Right lobe of liver (tissue), 6 donors: ENCODE measurements at regions of chr19 and their contacts with region 1.

Region 1: GRCh38 chr19:46495787-46496101 is at the start of gene PNMA8B:
- DNase-seq: peak in 2 of 3 donors; percentile 30 to 47
- ATAC-seq: peak in 1 of 4 donors; percentile 12
- H3K4me3 ChIP-seq: peak within 1 kb of the TSS in 1 of 3 donors; percentile 24
- H3K27ac ChIP-seq: no peak within 1 kb of the TSS
- H3K4me1 ChIP-seq: peaks cover 0 to 3% (median 0%) of the 10 kb centered on the region in 4 donors
- H3K27me3 ChIP-seq: no peaks in the 10 kb centered on the region
- CTCF ChIP-seq: no peak
- POLR2A ChIP-seq: no peak
- total RNA-seq, gene PNMA8B: 0.20 to 0.55 (median 0.33) TPM

Region 2: DNA sequence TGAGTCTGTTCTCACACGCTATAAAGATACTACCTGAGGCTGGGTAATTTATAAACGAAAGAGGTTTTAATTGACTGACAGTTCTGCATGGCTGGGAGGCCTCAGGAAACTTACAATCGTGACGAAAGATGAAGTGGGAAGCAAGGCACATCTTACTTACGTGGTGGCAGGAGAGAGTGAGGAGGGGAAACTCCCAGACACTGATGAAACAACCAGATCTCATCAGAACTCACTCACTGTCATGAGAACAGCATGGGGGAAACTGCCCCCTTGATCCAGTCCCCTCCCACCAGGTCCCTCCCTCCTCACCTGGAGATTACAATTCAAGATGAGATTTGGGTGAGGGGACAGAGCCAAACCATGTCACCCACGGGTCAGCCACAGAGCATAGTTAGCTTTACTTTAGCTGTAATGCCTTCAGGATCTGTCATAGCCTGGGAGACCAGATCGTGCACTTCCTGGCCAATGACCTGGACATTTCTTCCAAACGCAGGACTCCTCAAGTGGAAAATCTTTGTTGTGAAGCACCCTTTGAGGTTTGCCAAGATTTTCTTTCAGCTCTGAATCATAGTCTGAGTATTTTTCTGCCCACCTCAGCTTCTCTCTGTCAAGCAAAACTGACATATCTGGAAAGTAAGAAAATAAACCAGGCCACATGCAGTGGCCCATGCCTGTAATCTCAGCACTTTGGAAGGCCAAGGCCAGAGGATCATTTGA is 224.1 kb before region 1 on chr19:
- intact Hi-C with region 1: loop called in 1 of 2 experiments (anchors 10 kb)
- DNase-seq: no peak
- ATAC-seq: no peak
- H3K4me3 ChIP-seq: no peak overlapping the region
- H3K27ac ChIP-seq: no peak overlapping the region
- H3K4me1 ChIP-seq: no peaks in the 10 kb centered on the region
- H3K27me3 ChIP-seq: no peaks in the 10 kb centered on the region
- CTCF ChIP-seq: no peak
- POLR2A ChIP-seq: no peak